ENCODE measurements at regions of chr10 and their contacts with region 1.

Region 1: GRCh38 chr10:124092860-124093773 is at the start of gene CHST15:
- DNase-seq: peak; percentile 68 to 87
- ATAC-seq: peak; percentile 39
- H3K4me3 ChIP-seq: peak within 1 kb of the TSS; percentile 62 to 81
- H3K27ac ChIP-seq: peak within 1 kb of the TSS in 1 of 2 donors; percentile 85
- H3K4me1 ChIP-seq: no peaks in the 10 kb centered on the region
- H3K27me3 ChIP-seq: no peaks in the 10 kb centered on the region
- total RNA-seq, gene CHST15: 39.9 to 43.8 TPM

Region 2: DNA sequence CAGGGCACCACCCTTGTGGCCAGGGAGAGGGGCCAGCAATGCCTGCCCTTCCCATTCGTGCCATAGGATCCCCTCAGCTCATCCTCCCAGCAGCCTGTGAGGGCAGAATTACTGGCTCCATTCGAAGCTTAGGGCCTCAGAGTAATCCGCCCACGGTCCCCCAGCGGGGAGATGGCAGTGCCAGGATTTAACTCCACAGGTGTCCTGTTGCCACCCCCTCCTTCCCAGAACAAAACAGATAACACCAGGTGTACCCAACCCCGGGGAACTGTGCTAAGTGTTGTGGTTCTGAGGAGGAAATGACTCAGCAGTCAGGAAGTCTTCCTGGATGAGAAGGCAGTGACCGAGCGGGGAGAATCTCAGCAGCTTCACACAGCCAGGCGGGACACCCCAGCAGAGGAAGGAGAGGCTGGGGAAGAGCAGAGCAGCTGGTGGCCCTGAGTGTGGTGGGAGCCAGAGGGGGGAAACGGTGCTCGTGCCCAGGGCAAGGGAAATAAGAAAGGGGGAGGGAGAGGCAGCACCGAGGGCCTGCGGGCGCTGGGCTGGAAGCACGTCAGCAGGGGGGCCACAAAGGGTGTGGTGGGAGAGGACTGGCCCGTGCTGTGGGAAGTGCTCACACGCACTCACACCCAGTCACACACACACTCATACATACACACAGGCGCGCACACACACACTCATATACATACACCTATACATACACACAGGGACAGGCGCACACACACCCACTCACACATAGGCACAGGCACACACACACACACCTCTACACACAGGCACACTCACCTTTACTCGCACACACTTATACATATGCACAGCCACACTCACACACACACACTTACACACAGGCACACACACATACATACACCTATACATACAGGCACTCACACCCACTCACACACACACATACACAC is 60.1 kb after region 1 on chr10:
- intact Hi-C with region 1: loop called in 1 of 2 experiments (anchors 2 kb)
- DNase-seq: peak in 1 of 2 donors; percentile 70
- ATAC-seq: peak; percentile 53
- H3K4me3 ChIP-seq: no peak overlapping the region
- H3K27ac ChIP-seq: peak overlapping the region in 1 of 2 donors; percentile 49
- H3K4me1 ChIP-seq: peaks cover 0 to 7% of the 10 kb centered on the region in 2 donors
- H3K27me3 ChIP-seq: no peaks in the 10 kb centered on the region